GM12878 (cell line): ENCODE measurements at regions of chr19 and their contacts with region 1.

Region 1: DNA sequence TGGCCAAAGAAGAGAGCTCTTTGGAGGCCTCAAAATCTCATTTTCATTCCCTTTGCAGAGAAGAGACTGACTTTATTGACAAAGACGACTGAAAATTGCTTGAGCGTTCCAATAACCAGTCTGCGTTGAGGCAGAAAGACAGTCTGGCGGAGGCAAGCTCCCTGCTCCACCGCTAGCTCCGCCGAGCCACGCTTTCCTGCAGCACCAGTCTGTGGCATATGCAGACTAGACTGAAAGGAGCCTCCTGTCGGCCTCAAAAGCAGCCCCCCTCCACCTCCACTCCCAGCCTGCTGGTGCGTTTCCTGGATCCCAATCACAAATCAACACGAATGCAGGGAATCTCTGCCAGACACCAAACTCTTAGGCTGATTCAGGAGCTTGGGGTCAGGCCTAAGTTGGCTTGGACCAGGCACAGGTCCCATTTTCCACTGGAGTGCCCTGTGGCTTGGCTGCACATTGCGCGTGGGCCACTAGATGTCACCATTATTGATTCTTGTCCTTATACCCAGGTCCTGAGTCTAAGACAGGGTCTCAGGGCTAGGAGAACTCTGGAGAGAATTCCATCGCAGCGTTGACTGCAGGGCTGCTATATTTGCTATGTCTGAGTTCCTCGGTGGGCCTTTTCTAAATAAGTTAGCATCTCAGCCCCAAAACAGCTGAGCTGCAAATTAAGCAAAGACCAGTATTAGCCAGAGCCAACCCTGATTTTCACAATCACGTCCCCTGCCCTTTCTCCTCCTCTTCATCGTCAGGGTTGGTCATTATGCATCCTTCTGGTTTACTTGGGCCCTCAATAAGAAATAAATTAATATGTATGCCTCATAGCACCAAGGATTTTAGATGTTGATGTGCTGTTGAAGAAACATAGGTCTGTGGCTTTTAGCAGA is 5.2 kb upstream of the ZNF507 start:
- DNase-seq: no peak
- ATAC-seq: peak; percentile 95
- H3K4me3 ChIP-seq: no peak overlapping the region
- H3K27ac ChIP-seq: no peak overlapping the region
- H3K4me1 ChIP-seq: no peaks in the 10 kb centered on the region
- H3K27me3 ChIP-seq: no peaks in the 10 kb centered on the region
- CTCF ChIP-seq: peak; percentile 71 to 72 (median 71); a peak in 5 of 6 replicates
- EP300 ChIP-seq: no peak
- POLR2A ChIP-seq: no peak
- RAD21 ChIP-seq: peak; percentile 40

Region 2: DNA sequence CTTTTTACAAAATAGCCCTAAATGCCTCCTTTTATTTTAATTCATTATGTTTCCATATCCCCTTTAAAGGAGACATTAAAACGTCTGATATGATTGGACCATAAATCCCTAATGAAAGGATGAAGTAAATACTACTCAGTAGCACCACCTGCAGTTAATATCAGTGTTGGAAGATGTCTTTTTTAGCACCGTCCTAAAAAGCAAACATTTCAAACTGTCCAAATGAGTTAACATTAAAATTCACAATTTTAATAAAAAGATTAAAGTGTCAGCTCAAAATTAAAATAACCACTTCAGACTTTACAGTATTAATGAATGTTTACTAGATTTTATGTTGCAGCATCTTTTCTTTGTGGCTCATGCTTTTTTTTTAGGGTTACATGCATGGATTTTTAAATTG is 17.5 kb after region 1 on chr19:
- CTCF ChIA-PET with region 1: interaction called, 15 read pairs
- POLR2A ChIA-PET with region 1: no interaction called
- RAD21 ChIA-PET with region 1: interaction called, 3 read pairs
- SMC1A ChIA-PET with region 1: interaction called, 6 read pairs
- in situ Hi-C with region 1: no loop called
- intact Hi-C with region 1: no loop called
- DNase-seq: no peak
- ATAC-seq: no peak
- H3K4me3 ChIP-seq: no peak overlapping the region
- H3K27ac ChIP-seq: no peak overlapping the region
- H3K4me1 ChIP-seq: no peaks in the 10 kb centered on the region
- H3K27me3 ChIP-seq: no peaks in the 10 kb centered on the region
- CTCF ChIP-seq: peak in 1 of 3 experiments; percentile 21; a peak in 2 of 6 replicates
- EP300 ChIP-seq: no peak
- POLR2A ChIP-seq: no peak
- RAD21 ChIP-seq: no peak